Naive thymus-derived CD4-positive, alpha-beta T cell (primary cell): ENCODE measurements at regions of chr11 and their contacts with region 1.

Region 1: GRCh38 chr11:119323538-119324033 is 6.7 kb upstream of the MCAM start:
- DNase-seq: peak; percentile 61 to 82 (median 77)
- ATAC-seq: peak; percentile 50
- H3K4me3 ChIP-seq: no peak overlapping the region
- H3K4me3 Mint-ChIP-seq: peak overlapping the region in 4 of 10 donors; percentile 10 to 54 (median 44)
- H3K27ac ChIP-seq: no peak overlapping the region
- H3K27ac Mint-ChIP-seq: peak overlapping the region in 2 of 9 donors; percentile 15 to 57
- H3K4me1 ChIP-seq: no peaks in the 10 kb centered on the region
- H3K4me1 Mint-ChIP-seq: peaks cover 11 to 33% (median 26%) of the 10 kb centered on the region in 7 donors
- H3K27me3 ChIP-seq: no peaks in the 10 kb centered on the region
- H3K27me3 Mint-ChIP-seq: peaks cover 0 to 17% (median 11%) of the 10 kb centered on the region in 5 donors

Region 2: DNA sequence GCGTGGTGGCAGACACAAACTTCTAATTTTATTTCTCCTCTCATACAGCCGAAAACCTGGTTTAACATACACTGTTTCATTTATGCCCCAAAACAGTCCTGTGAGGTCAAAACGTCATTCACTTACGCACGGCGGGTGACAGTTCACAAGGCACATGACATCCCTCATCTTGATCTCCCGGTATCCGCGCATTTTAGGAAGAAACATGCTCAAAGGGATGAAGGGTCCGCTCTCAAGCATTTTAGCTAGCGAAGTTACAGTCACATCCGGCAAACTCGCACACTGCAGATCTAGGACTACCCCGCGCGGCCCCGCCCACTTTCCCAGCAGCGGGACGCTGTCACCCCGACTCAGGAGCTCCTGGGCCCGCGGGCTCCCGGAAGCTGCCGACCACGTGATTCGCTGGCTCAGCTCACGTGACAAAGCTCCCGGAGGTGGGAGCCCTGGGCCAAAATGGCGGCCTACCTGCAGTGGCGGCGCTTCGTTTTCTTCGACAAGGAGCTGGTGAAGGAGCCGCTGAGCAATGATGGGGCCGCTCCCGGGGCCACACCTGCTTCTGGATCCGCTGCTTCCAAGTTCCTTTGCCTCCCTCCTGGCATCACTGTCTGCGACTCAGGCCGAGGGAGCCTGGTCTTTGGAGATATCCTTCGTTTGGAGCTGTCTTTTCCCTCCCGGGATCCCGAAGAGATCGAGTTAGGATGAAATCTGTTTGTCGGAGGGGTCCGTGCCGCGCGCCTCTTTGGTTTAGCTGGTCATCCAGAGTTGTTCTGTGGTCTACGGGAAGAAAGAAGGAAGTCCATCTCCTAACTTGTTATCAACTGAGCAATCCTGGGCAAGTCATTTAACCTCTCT is 256.0 kb before region 1 on chr11 and contains the start of gene VPS11:
- CTCF ChIA-PET with region 1: interaction called, 5 read pairs
- POLR2A ChIA-PET with region 1: no interaction called
- intact Hi-C with region 1: loop called (anchors 1 kb)
- DNase-seq: peak; percentile 81 to 98 (median 97)
- ATAC-seq: peak; percentile 93
- H3K4me3 ChIP-seq: peak within 1 kb of the TSS; percentile 93
- H3K4me3 Mint-ChIP-seq: peak within 1 kb of the TSS; percentile 90 to 100 (median 95)
- H3K27ac ChIP-seq: peak within 1 kb of the TSS; percentile 96
- H3K27ac Mint-ChIP-seq: peak within 1 kb of the TSS; percentile 92 to 100 (median 97)
- H3K4me1 ChIP-seq: peaks cover 18 to 23% of the 10 kb centered on the region in 2 donors
- H3K4me1 Mint-ChIP-seq: peaks cover 26 to 59% (median 47%) of the 10 kb centered on the region in 7 donors
- H3K27me3 ChIP-seq: no peaks in the 10 kb centered on the region
- H3K27me3 Mint-ChIP-seq: no peaks in the 10 kb centered on the region
- total RNA-seq, gene VPS11: 39.0 to 73.9 (median 57.1) TPM

Region 3: DNA sequence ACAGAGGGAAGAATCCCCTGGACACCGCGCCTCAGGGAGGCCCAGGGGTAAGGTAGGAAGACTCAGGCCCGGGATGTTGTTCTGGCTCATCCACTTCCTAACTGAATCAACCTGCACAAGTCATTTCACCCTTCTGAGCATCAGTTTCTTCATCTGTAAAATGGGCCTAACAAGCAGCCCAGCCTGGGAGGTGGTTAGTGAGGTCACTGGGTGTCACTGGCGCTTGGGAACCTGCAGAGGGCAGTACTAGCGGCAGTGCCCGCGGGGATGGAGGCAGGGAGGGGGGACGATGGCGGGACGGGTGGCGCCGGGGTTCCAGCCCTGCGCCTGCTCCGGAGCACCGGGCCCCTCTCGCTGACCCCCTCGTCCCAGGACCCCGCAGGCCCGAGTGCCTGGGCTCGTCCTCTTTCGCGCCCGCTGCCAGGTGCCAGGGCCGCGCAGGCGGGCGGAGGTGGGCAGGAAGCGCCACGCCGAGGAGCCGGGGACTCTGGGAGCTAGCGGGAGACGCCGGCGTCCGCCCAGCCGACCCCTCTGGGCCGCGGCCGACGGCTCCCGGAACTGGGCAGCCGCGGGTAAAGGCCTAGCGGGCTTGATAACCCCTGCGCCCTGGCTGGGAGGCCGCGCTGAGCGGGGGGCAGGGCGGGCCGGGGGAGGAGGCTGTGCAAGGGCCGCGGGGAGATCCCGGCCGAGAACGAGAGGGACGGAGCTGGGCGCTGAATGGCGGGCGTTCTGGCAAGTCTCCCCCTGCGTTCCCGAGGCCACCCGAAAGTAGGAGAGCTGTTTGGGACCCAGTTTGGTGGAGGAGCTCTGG is 154.9 kb before region 1 on chr11 and contains the start of gene NLRX1:
- CTCF ChIA-PET with region 1: interaction called, 7 read pairs
- POLR2A ChIA-PET with region 1: interaction called, 3 read pairs
- intact Hi-C with region 1: loop called (anchors 1 to 2 kb)
- DNase-seq: peak; percentile 67 to 85 (median 82)
- ATAC-seq: peak; percentile 98
- H3K4me3 ChIP-seq: peak within 1 kb of the TSS; percentile 75
- H3K4me3 Mint-ChIP-seq: peak within 1 kb of the TSS; percentile 86 to 94 (median 90)
- H3K27ac ChIP-seq: peak within 1 kb of the TSS; percentile 73
- H3K27ac Mint-ChIP-seq: peak within 1 kb of the TSS; percentile 64 to 95 (median 87)
- H3K4me1 ChIP-seq: peaks cover 0 to 4% of the 10 kb centered on the region in 2 donors
- H3K4me1 Mint-ChIP-seq: peaks cover 4 to 25% (median 11%) of the 10 kb centered on the region in 7 donors
- H3K27me3 ChIP-seq: no peaks in the 10 kb centered on the region
- H3K27me3 Mint-ChIP-seq: no peaks in the 10 kb centered on the region
- total RNA-seq, gene NLRX1: 8.3 to 19.5 (median 9.8) TPM

Region 4: GRCh38 chr11:119284344-119285157 is 39.0 kb before region 1 on chr11:
- CTCF ChIA-PET with region 1: interaction called, 10 read pairs
- POLR2A ChIA-PET with region 1: interaction called, 8 read pairs
- intact Hi-C with region 1: loop called (anchors 1 to 2 kb)
- DNase-seq: peak in 7 of 9 donors; percentile 56 to 76 (median 68)
- ATAC-seq: peak; percentile 94
- H3K4me3 ChIP-seq: no peak overlapping the region
- H3K4me3 Mint-ChIP-seq: peak overlapping the region in 2 of 10 donors; percentile 23 to 51
- H3K27ac ChIP-seq: no peak overlapping the region
- H3K27ac Mint-ChIP-seq: peak overlapping the region; percentile 24 to 91 (median 55)
- H3K4me1 ChIP-seq: peaks cover 0 to 6% of the 10 kb centered on the region in 2 donors
- H3K4me1 Mint-ChIP-seq: peaks cover 17 to 56% (median 41%) of the 10 kb centered on the region in 7 donors
- H3K27me3 ChIP-seq: no peaks in the 10 kb centered on the region
- H3K27me3 Mint-ChIP-seq: no peaks in the 10 kb centered on the region

Region 5: DNA sequence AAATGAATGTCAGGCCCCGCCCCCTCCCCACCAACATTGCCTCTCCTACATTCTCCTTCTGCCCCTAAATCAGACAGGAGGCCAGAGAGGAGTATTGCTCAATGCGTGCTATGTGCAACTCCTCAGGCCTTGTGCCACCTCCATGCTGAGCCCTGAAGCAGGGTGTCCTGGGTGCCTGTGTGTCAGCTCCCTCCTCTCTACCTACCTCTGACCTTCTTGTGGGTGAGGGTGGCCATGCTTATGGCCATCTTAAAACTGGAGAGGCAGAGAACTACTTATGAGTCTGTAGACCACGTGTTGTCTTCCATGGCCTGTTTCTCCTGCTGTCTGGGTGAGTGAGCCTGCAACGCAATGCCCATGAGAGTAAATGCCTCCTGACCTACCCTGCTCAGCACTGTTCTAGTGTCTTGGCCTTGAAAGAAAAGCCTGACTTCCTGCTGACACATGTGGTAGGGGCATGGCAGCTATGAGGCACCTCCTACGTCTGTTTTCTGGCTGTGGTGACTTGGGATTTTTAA is 17.2 kb before region 1 on chr11:
- CTCF ChIA-PET with region 1: interaction called, 42 read pairs
- POLR2A ChIA-PET with region 1: interaction called, 19 read pairs
- intact Hi-C with region 1: loop called in 1 of 2 experiments (anchors 1 kb)
- DNase-seq: peak in 8 of 9 donors; percentile 33 to 85 (median 82)
- ATAC-seq: peak; percentile 97
- H3K4me3 ChIP-seq: peak overlapping the region; percentile 8
- H3K4me3 Mint-ChIP-seq: peak overlapping the region; percentile 31 to 88 (median 80)
- H3K27ac ChIP-seq: peak overlapping the region; percentile 76
- H3K27ac Mint-ChIP-seq: peak overlapping the region; percentile 89 to 100 (median 98)
- H3K4me1 ChIP-seq: peaks cover 0 to 31% of the 10 kb centered on the region in 2 donors
- H3K4me1 Mint-ChIP-seq: peaks cover 21 to 49% (median 36%) of the 10 kb centered on the region in 7 donors
- H3K27me3 ChIP-seq: no peaks in the 10 kb centered on the region
- H3K27me3 Mint-ChIP-seq: no peaks in the 10 kb centered on the region